Left ventricle myocardium inferior (tissue), 1 donor: ENCODE measurements at regions of chr4 and their contacts with region 1.

Region 1: GRCh38 chr4:139728840-139729239 is 63.2 kb downstream of the MGST2 start:
- DNase-seq: no peak
- H3K4me3 ChIP-seq: no peak overlapping the region
- H3K27ac ChIP-seq: no peak overlapping the region
- H3K4me1 ChIP-seq: peaks cover 13% of the 10 kb centered on the region
- H3K27me3 ChIP-seq: no peaks in the 10 kb centered on the region
- CTCF ChIP-seq: no peak

Region 2: GRCh38 chr4:140308366-140309123 is 579.7 kb after region 1 on chr4:
- intact Hi-C with region 1: no loop called
- DNase-seq: peak; percentile 66
- H3K4me3 ChIP-seq: peak overlapping the region; percentile 3
- H3K27ac ChIP-seq: peak overlapping the region; percentile 91
- H3K4me1 ChIP-seq: peaks cover 35% of the 10 kb centered on the region
- H3K27me3 ChIP-seq: no peaks in the 10 kb centered on the region
- CTCF ChIP-seq: no peak

Region 3: GRCh38 chr4:140326395-140326993 is 597.7 kb after region 1 on chr4:
- intact Hi-C with region 1: loop called (anchors 10 kb)
- DNase-seq: no peak
- H3K4me3 ChIP-seq: no peak overlapping the region
- H3K27ac ChIP-seq: no peak overlapping the region
- H3K4me1 ChIP-seq: no peaks in the 10 kb centered on the region
- H3K27me3 ChIP-seq: no peaks in the 10 kb centered on the region
- CTCF ChIP-seq: peak; percentile 76